ENCODE measurements at regions of chr19 and their contacts with region 1.

Region 1: DNA sequence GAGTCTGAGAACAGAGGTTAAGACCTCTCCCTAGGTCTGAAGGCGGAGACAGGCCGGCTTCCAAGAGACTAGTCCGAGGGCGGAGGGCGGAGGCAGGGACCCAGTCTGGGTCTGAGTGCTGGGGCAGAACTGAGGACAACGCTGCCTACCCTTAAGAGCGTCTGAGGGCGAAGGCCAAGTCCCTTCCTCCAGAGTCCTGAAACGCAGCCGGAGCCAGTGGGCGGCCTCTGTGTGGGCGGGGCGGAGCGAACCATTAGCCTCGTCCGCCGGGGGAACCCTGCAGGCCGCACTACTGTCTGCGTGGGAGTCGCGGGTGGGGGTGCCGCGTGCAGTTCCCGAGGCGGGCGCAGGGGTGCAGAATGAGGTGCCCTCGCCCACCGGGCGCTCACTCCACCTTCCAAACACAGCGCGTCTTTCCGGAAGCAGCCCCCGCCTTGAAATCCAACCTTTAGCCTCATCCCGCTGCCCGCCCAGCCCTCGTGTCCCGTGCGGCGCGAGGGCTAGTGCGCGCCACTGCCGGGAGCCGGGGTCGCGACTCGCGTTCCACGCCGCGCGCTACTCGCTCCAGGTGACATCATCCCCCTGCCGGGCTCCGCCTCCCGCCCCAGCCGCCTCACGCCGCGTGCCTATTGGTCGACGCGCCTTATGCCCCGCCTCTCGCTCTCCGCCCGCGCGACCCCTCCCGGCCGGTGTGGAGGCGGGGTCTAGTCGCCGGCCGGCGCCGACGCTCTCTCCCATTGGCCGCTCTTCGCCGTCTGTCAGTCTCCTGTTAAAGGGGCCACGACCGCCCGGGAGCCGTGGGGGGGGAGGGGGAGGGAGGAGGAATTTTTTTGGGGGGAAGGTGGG is at the start of gene C19orf73:
- DNase-seq: peak; percentile 93 to 98 (median 97)
- ATAC-seq: peak; percentile 91
- H3K4me3 ChIP-seq: peak within 1 kb of the TSS; percentile 83
- H3K4me3 Mint-ChIP-seq: peak within 1 kb of the TSS; percentile 83 to 91 (median 88)
- H3K27ac ChIP-seq: peak within 1 kb of the TSS; percentile 92
- H3K27ac Mint-ChIP-seq: peak within 1 kb of the TSS; percentile 89 to 95 (median 93)
- H3K4me1 ChIP-seq: peaks cover 13 to 16% of the 10 kb centered on the region in 2 donors
- H3K4me1 Mint-ChIP-seq: peaks cover 25 to 43% (median 39%) of the 10 kb centered on the region in 7 donors
- H3K27me3 ChIP-seq: no peaks in the 10 kb centered on the region
- H3K27me3 Mint-ChIP-seq: peaks cover 0 to 27% (median 0%) of the 10 kb centered on the region in 5 donors
- total RNA-seq, gene C19orf73: 1.3 to 2.8 (median 2.2) TPM

Region 2: GRCh38 chr19:49073514-49074378 is 45.0 kb before region 1 on chr19:
- CTCF ChIA-PET with region 1: no interaction called
- POLR2A ChIA-PET with region 1: no interaction called
- intact Hi-C with region 1: no loop called
- DNase-seq: no peak
- ATAC-seq: no peak
- H3K4me3 ChIP-seq: no peak overlapping the region
- H3K4me3 Mint-ChIP-seq: peak overlapping the region; percentile 11 to 82 (median 72)
- H3K27ac ChIP-seq: no peak overlapping the region
- H3K27ac Mint-ChIP-seq: peak overlapping the region in 3 of 9 donors; percentile 4 to 62 (median 7)
- H3K4me1 ChIP-seq: no peaks in the 10 kb centered on the region
- H3K4me1 Mint-ChIP-seq: peaks cover 7 to 20% (median 13%) of the 10 kb centered on the region in 7 donors
- H3K27me3 ChIP-seq: peaks cover 4 to 12% of the 10 kb centered on the region in 2 donors
- H3K27me3 Mint-ChIP-seq: peaks cover 48 to 73% (median 53%) of the 10 kb centered on the region in 5 donors

Region 3: DNA sequence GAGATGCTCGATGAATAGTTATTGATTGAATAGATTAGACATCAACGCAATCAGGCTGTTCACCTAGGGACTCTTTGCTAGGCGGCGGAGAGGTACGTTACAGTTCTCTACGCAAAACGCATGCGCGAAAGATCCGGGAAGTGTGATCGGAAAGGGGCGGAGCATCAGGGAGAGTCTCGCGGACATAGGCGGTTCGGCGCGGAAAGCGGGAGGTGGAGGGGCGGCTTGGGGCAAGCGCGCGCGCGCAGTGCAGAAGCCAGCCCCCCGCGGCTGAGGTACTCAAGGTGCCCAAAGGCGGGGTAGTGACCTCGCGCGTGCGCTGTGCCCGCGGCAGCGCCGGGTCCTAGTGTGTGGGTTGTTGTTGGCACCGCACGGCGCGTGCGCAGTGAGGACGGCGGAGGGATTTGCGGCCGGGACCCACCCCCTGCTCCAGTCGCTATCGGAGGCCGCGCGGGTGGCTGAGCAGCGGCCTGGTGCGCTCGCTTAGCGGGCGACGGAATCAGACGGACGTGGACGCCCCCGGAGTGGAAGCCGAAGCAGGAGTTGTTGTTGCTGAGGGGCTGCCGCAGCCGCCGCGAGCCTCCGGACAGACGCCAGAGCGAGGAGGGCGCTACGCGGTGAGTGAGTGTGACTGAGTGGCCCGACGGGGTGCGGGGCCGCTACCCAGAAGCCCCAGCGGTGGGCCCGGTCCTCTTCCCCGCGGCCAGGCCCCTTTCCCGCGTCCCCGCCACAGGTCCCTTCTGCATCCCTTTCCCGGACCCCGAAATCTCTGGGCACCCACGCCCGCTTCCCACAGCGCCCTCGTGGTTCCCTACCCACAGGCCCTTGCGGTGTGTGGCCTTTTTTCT is 33.5 kb before region 1 on chr19 and contains the start of gene SNRNP70:
- CTCF ChIA-PET with region 1: no interaction called
- POLR2A ChIA-PET with region 1: no interaction called
- intact Hi-C with region 1: loop called (anchors 1 kb)
- DNase-seq: peak; percentile 99 to 100 (median 100)
- ATAC-seq: peak; percentile 97
- H3K4me3 ChIP-seq: peak within 1 kb of the TSS; percentile 72
- H3K4me3 Mint-ChIP-seq: peak within 1 kb of the TSS; percentile 71 to 97 (median 94)
- H3K27ac ChIP-seq: peak within 1 kb of the TSS; percentile 94
- H3K27ac Mint-ChIP-seq: peak within 1 kb of the TSS; percentile 83 to 96 (median 88)
- H3K4me1 ChIP-seq: peaks cover 19% of the 10 kb centered on the region in 2 donors
- H3K4me1 Mint-ChIP-seq: peaks cover 18 to 49% (median 35%) of the 10 kb centered on the region in 7 donors
- H3K27me3 ChIP-seq: no peaks in the 10 kb centered on the region
- H3K27me3 Mint-ChIP-seq: peaks cover 0 to 5% (median 4%) of the 10 kb centered on the region in 5 donors
- total RNA-seq, gene SNRNP70: 243 to 837 (median 449) TPM

Region 4: GRCh38 chr19:49142866-49143335 is 24.1 kb after region 1 on chr19:
- CTCF ChIA-PET with region 1: interaction called, 3 read pairs
- POLR2A ChIA-PET with region 1: interaction called, 3 read pairs
- intact Hi-C with region 1: loop called in 1 of 2 experiments (anchors 1 kb)
- DNase-seq: peak in 5 of 9 donors; percentile 18 to 79 (median 34)
- ATAC-seq: peak; percentile 90
- H3K4me3 ChIP-seq: peak overlapping the region; percentile 41
- H3K4me3 Mint-ChIP-seq: peak overlapping the region; percentile 66 to 94 (median 77)
- H3K27ac ChIP-seq: no peak overlapping the region
- H3K27ac Mint-ChIP-seq: peak overlapping the region in 2 of 9 donors; percentile 20 to 78
- H3K4me1 ChIP-seq: peaks cover 0 to 7% of the 10 kb centered on the region in 2 donors
- H3K4me1 Mint-ChIP-seq: peaks cover 17 to 29% (median 27%) of the 10 kb centered on the region in 7 donors
- H3K27me3 ChIP-seq: no peaks in the 10 kb centered on the region
- H3K27me3 Mint-ChIP-seq: peaks cover 26 to 41% (median 34%) of the 10 kb centered on the region in 5 donors

Region 5: DNA sequence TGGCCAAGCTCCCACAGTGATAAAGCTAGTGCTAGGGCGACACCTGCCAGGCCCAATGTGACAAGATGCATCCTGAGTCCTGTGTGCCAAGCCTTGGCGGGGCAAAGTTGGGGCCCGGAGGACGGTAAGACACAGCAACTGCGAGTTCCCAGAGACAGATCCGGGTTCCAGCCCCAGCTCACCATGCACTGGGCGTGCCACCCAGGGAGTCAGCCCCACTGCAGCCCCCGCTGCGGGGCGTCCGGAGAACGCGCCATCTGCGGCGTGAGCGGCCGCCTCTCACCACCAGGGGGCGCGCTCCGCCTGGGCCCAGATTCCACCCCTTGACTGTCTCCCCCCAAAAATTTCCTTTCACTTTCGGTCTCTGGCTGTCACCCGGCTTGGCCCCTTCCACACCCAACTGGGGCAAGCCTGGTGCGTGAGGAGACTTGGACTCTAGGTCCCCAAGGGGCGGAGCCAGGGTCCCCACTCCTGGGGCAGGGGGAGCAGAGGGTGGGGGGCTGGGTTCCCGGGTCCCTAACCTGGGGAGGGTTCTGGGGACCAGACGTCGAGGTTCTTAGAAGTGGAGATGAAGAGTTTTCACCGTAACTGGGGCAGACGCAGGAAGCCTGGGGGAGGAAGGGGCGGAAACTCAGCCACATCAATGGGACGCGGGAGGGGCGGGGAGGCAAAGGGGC is 355.2 kb after region 1 on chr19 and contains the start of gene FLT3LG:
- CTCF ChIA-PET with region 1: no interaction called
- POLR2A ChIA-PET with region 1: no interaction called
- intact Hi-C with region 1: loop called in 1 of 2 experiments (anchors 10 kb)
- DNase-seq: peak; percentile 91 to 98 (median 96)
- ATAC-seq: peak; percentile 72
- H3K4me3 ChIP-seq: peak within 1 kb of the TSS; percentile 87
- H3K4me3 Mint-ChIP-seq: peak within 1 kb of the TSS; percentile 91 to 100 (median 96)
- H3K27ac ChIP-seq: peak within 1 kb of the TSS; percentile 99
- H3K27ac Mint-ChIP-seq: peak within 1 kb of the TSS; percentile 95 to 100 (median 98)
- H3K4me1 ChIP-seq: peaks cover 50 to 52% of the 10 kb centered on the region in 2 donors
- H3K4me1 Mint-ChIP-seq: peaks cover 18 to 62% (median 51%) of the 10 kb centered on the region in 7 donors
- H3K27me3 ChIP-seq: no peaks in the 10 kb centered on the region
- H3K27me3 Mint-ChIP-seq: no peaks in the 10 kb centered on the region
- total RNA-seq, gene FLT3LG: 90.6 to 401 (median 280) TPM

Region 6: DNA sequence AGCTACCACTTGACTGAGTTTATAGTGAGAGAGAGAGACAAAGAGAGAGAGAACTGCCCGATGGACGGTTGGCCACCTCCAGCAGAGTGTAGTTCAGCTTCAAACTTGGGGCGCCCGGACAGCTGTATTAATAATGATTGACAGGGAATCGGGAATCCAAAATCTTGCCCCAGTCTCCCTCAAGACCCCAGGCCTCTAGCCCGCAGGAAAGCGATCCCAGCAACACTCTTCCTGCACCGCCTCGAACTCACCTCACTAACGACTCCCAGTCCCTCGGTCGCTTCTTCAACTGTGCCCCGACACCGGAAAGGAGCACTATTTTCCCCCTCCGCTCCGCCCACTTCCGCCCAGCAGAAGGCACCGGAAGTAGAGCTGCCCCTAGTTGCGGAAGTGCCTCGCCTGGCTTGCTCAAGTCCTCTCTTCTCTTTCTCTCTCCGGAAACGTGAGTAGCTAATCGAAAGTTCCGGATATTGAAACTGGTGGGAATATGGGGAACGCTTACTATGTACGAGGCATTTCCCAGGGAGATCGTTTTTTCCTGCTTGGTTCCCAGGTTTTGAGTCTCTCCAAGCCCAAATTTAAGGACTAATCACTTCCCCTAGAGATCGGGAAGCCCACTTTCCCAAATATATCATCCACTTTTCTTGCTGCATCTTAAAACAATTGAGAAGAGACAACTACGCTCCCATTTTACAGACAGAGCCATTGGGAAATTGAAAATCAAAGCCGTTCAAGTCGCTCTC is 461.6 kb after region 1 on chr19 and contains the start of gene NOSIP:
- CTCF ChIA-PET with region 1: no interaction called
- POLR2A ChIA-PET with region 1: no interaction called
- intact Hi-C with region 1: loop called in 1 of 2 experiments (anchors 5 kb)
- DNase-seq: peak; percentile 88 to 96 (median 94)
- ATAC-seq: peak; percentile 100
- H3K4me3 ChIP-seq: peak within 1 kb of the TSS; percentile 68
- H3K4me3 Mint-ChIP-seq: peak within 1 kb of the TSS; percentile 91 to 98 (median 94)
- H3K27ac ChIP-seq: peak within 1 kb of the TSS; percentile 84
- H3K27ac Mint-ChIP-seq: peak within 1 kb of the TSS; percentile 85 to 98 (median 92)
- H3K4me1 ChIP-seq: peaks cover 0 to 22% of the 10 kb centered on the region in 2 donors
- H3K4me1 Mint-ChIP-seq: peaks cover 20 to 49% (median 36%) of the 10 kb centered on the region in 7 donors
- H3K27me3 ChIP-seq: no peaks in the 10 kb centered on the region
- H3K27me3 Mint-ChIP-seq: no peaks in the 10 kb centered on the region
- total RNA-seq, gene NOSIP: 222 to 267 (median 228) TPM

Region 7: DNA sequence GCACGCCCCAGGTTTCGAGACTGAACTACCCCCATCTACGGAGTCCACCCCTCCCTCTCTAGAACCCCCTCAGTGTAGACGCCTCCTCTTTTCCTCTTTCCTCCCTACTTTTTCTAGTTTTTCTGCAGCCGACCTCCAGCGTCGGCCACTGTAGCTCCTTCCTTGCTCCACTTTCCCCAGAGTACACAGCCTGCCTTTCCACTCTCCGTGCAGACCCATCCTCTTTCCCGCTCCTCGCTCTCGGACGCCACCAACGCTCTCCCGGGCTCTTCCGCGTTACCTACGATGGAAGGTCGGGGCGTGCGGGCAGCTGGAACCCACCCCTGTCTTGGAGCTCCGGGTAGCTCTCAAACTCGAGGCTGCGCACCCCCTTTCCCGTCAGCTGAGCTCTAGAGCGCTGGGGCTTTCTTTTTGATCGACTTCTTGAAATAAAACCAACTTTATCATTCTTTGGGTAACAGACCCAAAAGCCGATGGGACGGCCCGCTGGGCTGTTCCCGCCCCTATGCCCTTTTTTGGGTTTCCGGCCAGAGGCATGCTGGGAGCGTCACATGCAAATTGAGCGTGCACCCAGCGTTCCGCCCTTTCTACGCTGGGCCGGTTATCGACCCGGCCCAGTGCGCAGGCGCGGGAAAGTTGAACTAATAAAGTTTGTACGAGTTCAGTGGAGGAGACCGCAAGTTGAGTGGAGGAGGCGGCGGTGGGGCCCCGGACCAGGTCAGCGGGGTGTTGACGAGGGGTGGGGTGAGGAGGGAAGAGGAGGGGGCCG is 546.7 kb after region 1 on chr19 and contains the starts of genes BCL2L12 and IRF3:
- CTCF ChIA-PET with region 1: no interaction called
- POLR2A ChIA-PET with region 1: no interaction called
- intact Hi-C with region 1: loop called in 1 of 2 experiments (anchors 2 kb)
- DNase-seq: peak; percentile 99
- ATAC-seq: peak; percentile 90
- H3K4me3 ChIP-seq: peak within 1 kb of the TSS; percentile 95
- H3K4me3 Mint-ChIP-seq: peak within 1 kb of the TSS; percentile 97 to 100 (median 99)
- H3K27ac ChIP-seq: peak within 1 kb of the TSS; percentile 80
- H3K27ac Mint-ChIP-seq: peak within 1 kb of the TSS; percentile 96 to 99 (median 97)
- H3K4me1 ChIP-seq: peaks cover 23% of the 10 kb centered on the region in 2 donors
- H3K4me1 Mint-ChIP-seq: peaks cover 24 to 47% (median 39%) of the 10 kb centered on the region in 7 donors
- H3K27me3 ChIP-seq: no peaks in the 10 kb centered on the region
- H3K27me3 Mint-ChIP-seq: peaks cover 0 to 2% (median 0%) of the 10 kb centered on the region in 5 donors
- total RNA-seq, gene BCL2L12: 11.3 to 57.2 (median 22.6) TPM
- total RNA-seq, gene IRF3: 176 to 346 (median 212) TPM